Ovary (tissue), 10 donors: ENCODE measurements at regions of chr15 and their contacts with region 1.

Region 1: GRCh38 chr15:98647774-98648653 is at the start of gene IGF1R:
- DNase-seq: peak; percentile 86 to 95 (median 91)
- H3K4me3 ChIP-seq: peak within 1 kb of the TSS; percentile 93
- H3K27ac ChIP-seq: peak within 1 kb of the TSS; percentile 95 to 97
- H3K4me1 ChIP-seq: peaks cover 2% of the 10 kb centered on the region
- H3K27me3 ChIP-seq: no peaks in the 10 kb centered on the region
- CTCF ChIP-seq: peak in 2 of 3 donors; percentile 35 to 43
- EP300 ChIP-seq: no peak
- POLR2A ChIP-seq: peak; percentile 29
- total RNA-seq, gene IGF1R: 39.5 to 88.7 (median 70.2) TPM

Region 2: GRCh38 chr15:98442379-98442833 is 205.6 kb before region 1 on chr15:
- intact Hi-C with region 1: loop called in 1 of 4 experiments (anchors 10 kb)
- DNase-seq: peak; percentile 30 to 71 (median 47)
- H3K4me3 ChIP-seq: no peak overlapping the region
- H3K27ac ChIP-seq: no peak overlapping the region
- H3K4me1 ChIP-seq: no peaks in the 10 kb centered on the region
- H3K27me3 ChIP-seq: no peaks in the 10 kb centered on the region
- CTCF ChIP-seq: peak; percentile 47 to 66 (median 48)
- EP300 ChIP-seq: no peak
- POLR2A ChIP-seq: no peak

Region 3: GRCh38 chr15:98518823-98519561 is 129.0 kb before region 1 on chr15:
- intact Hi-C with region 1: loop called in 3 of 4 experiments (anchors 2 to 10 kb)
- DNase-seq: peak in 4 of 5 donors; percentile 47 to 68 (median 56)
- H3K4me3 ChIP-seq: no peak overlapping the region
- H3K27ac ChIP-seq: no peak overlapping the region
- H3K4me1 ChIP-seq: peaks cover 1% of the 10 kb centered on the region
- H3K27me3 ChIP-seq: no peaks in the 10 kb centered on the region
- CTCF ChIP-seq: peak; percentile 77 to 83 (median 77)
- EP300 ChIP-seq: no peak
- POLR2A ChIP-seq: no peak

Region 4: DNA sequence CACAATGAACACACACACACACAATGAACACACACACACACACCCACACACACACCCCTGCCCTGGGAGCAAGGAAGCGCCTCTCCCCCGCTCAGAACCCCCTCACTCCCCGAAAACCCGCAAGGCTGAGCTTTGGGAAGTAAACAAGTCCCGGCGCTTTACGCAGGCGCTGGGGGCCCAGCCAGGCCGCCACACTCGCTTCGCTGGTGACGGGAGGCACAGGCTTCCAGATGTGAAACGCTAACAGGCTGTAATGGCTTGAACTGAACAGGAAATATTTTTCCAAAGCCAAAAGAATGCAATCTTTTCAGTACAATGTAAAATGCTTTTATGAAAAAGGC is 122.4 kb before region 1 on chr15:
- intact Hi-C with region 1: loop called in 2 of 4 experiments (anchors 5 to 10 kb)
- DNase-seq: peak; percentile 57 to 81 (median 67)
- H3K4me3 ChIP-seq: no peak overlapping the region
- H3K27ac ChIP-seq: peak overlapping the region; percentile 49 to 75
- H3K4me1 ChIP-seq: peaks cover 4% of the 10 kb centered on the region
- H3K27me3 ChIP-seq: no peaks in the 10 kb centered on the region
- CTCF ChIP-seq: no peak
- EP300 ChIP-seq: no peak
- POLR2A ChIP-seq: no peak

Region 5: DNA sequence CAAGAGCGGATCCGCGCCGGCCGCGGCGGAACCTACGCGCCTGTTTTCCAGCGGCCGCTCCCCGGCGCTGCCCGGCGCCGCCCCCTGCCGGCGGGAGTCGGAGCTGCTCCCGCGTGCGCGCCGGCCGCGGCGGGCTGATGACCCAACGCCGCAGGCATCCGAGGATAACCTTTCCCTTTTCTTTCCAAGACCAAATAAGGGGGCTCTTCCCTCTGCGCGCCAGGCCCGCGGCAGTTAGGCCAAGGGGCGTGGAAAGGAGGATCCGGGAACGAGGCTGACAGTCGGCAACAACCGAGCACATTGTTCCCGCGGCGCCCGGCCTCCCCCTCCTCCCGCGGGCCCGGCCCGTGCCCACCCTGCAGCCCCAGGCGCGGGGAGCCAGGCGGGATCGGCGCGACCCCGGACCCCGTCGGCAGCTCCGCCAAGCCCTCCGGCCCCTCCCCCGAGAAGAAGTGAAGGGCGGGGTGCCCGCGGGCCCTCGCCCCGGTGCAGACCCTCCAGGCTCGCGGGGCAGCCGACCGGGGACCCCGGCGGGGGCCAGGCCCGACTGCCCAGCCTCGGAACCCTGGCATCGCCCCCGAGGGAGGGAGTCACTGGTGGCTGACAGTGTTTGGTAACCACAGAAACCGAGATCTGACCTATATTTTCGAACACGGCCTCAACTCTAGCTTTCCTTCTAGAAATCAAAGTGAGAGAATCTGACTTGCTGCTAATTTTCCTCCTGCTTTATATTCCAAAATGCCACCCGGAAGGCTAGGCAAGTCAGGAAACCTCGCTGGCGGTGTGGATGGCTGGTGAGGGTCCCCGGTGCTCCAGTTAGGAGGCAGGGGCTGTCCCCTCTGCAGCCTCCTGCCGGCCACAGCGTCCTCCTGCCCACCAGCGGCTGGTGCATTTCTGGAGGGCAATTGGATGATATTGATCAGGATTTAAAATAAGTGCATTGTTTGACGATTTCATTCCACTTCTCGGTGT is 411.3 kb after region 1 on chr15:
- intact Hi-C with region 1: loop called in 3 of 4 experiments (anchors 10 kb)
- DNase-seq: peak; percentile 84 to 92 (median 89)
- H3K4me3 ChIP-seq: peak overlapping the region; percentile 37
- H3K27ac ChIP-seq: peak overlapping the region; percentile 72 to 81
- H3K4me1 ChIP-seq: no peaks in the 10 kb centered on the region
- H3K27me3 ChIP-seq: no peaks in the 10 kb centered on the region
- CTCF ChIP-seq: peak; percentile 71 to 93 (median 86)
- EP300 ChIP-seq: no peak
- POLR2A ChIP-seq: no peak

Region 6: GRCh38 chr15:99076552-99077308 is 428.7 kb after region 1 on chr15:
- intact Hi-C with region 1: loop called in 1 of 4 experiments (anchors 5 kb)
- DNase-seq: peak; percentile 74 to 83 (median 76)
- H3K4me3 ChIP-seq: peak overlapping the region; percentile 8
- H3K27ac ChIP-seq: peak overlapping the region in 1 of 2 donors; percentile 31
- H3K4me1 ChIP-seq: no peaks in the 10 kb centered on the region
- H3K27me3 ChIP-seq: no peaks in the 10 kb centered on the region
- CTCF ChIP-seq: peak; percentile 72 to 89 (median 87)
- EP300 ChIP-seq: no peak
- POLR2A ChIP-seq: no peak